Mammary epithelial cell (primary cell): ENCODE measurements at regions of chr14 and their contacts with region 1.

Region 1: GRCh38 chr14:20690848-20691523 is 2.4 kb downstream of the ANG start:
- DNase-seq: peak; percentile 65
- H3K4me3 ChIP-seq: no peak overlapping the region
- H3K27ac ChIP-seq: no peak overlapping the region
- H3K4me1 ChIP-seq: no peaks in the 10 kb centered on the region
- H3K27me3 ChIP-seq: no peaks in the 10 kb centered on the region
- CTCF ChIP-seq: peak; percentile 77 to 83

Region 2: GRCh38 chr14:20530771-20531571 is 160.0 kb before region 1 on chr14:
- CTCF ChIA-PET with region 1: no interaction called
- dilution Hi-C with region 1: no loop called
- in situ Hi-C with region 1: no loop called
- intact Hi-C with region 1: loop called (anchors 1 kb)
- DNase-seq: peak; percentile 58
- H3K4me3 ChIP-seq: no peak overlapping the region
- H3K27ac ChIP-seq: no peak overlapping the region
- H3K4me1 ChIP-seq: no peaks in the 10 kb centered on the region
- H3K27me3 ChIP-seq: no peaks in the 10 kb centered on the region
- CTCF ChIP-seq: peak; percentile 70 to 79

Region 3: GRCh38 chr14:20652996-20653975 is 37.7 kb before region 1 on chr14:
- CTCF ChIA-PET with region 1: no interaction called
- dilution Hi-C with region 1: no loop called
- in situ Hi-C with region 1: no loop called
- intact Hi-C with region 1: loop called (anchors 1 kb)
- DNase-seq: peak; percentile 90
- H3K4me3 ChIP-seq: peak overlapping the region; percentile 4 to 36 (median 14)
- H3K27ac ChIP-seq: no peak overlapping the region
- H3K4me1 ChIP-seq: no peaks in the 10 kb centered on the region
- H3K27me3 ChIP-seq: peaks cover 2% of the 10 kb centered on the region
- CTCF ChIP-seq: no peak

Region 4: DNA sequence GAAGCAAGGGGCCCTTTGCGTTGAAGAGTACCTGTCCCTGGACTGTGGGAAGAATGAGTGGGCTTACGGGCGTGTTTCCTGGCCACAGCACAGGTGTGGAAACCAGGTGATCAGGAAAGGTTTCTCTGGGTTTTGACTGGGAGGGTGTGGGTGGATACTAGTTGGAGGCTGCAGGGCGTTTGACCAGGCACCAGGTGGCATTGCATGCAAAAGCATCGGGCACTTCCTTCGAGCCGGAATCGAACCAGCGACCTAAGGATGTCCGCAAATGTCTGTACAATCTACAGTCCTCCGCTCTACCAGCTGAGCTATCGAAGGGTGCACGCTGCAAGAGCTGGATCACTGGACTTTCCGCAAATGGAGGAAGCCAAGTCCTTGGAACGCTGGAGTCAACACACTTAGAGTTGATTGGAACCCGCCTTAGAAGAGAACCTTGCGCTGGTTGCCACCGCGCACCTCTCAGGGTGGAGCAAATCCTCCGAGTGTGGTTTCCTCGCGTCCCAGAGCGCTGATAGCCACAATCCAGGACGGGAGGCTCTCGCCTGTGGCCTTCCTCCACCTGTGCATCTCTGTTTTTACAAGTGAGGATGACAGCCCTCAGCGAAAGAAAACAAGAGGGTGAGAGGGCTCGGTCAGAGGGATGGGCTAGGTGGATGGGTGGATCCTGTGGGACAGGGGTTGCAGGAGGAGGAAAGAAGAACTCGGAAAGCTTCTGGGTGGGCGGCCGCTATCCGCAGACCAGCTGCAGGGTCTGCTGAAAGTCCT is 27.8 kb before region 1 on chr14:
- CTCF ChIA-PET with region 1: interaction called, 9 read pairs
- dilution Hi-C with region 1: no loop called
- in situ Hi-C with region 1: no loop called
- intact Hi-C with region 1: loop called (anchors 1 kb)
- DNase-seq: peak; percentile 89
- H3K4me3 ChIP-seq: peak overlapping the region; percentile 20 to 44 (median 43)
- H3K27ac ChIP-seq: no peak overlapping the region
- H3K4me1 ChIP-seq: no peaks in the 10 kb centered on the region
- H3K27me3 ChIP-seq: no peaks in the 10 kb centered on the region
- CTCF ChIP-seq: peak; percentile 41 to 78

Region 5: GRCh38 chr14:20707622-20708021 is 16.6 kb after region 1 on chr14:
- CTCF ChIA-PET with region 1: no interaction called
- dilution Hi-C with region 1: no loop called
- in situ Hi-C with region 1: no loop called
- intact Hi-C with region 1: no loop called
- DNase-seq: peak; percentile 32
- H3K4me3 ChIP-seq: no peak overlapping the region
- H3K27ac ChIP-seq: no peak overlapping the region
- H3K4me1 ChIP-seq: no peaks in the 10 kb centered on the region
- H3K27me3 ChIP-seq: no peaks in the 10 kb centered on the region
- CTCF ChIP-seq: no peak

Region 6: GRCh38 chr14:21103710-21104447 is 412.9 kb after region 1 on chr14:
- CTCF ChIA-PET with region 1: no interaction called
- dilution Hi-C with region 1: no loop called
- in situ Hi-C with region 1: loop called in 1 of 2 experiments (anchors 25 kb)
- intact Hi-C with region 1: loop called (anchors 5 kb)
- DNase-seq: peak; percentile 94
- H3K4me3 ChIP-seq: peak overlapping the region; percentile 32 to 85 (median 58)
- H3K27ac ChIP-seq: peak overlapping the region; percentile 86
- H3K4me1 ChIP-seq: peaks cover 62% of the 10 kb centered on the region
- H3K27me3 ChIP-seq: no peaks in the 10 kb centered on the region
- CTCF ChIP-seq: peak; percentile 73 to 86